ENCODE measurements at regions of chr22 and their contacts with region 1.

Region 1: GRCh38 chr22:19854778-19855503 is at the starts of genes GNB1L and RTL10:
- DNase-seq: peak; percentile 100

Region 2: GRCh38 chr22:19843107-19843856 is 11.7 kb before region 1 on chr22:
- CTCF ChIA-PET with region 1: no interaction called
- POLR2A ChIA-PET with region 1: interaction called, 15 read pairs
- DNase-seq: no peak

Region 3: GRCh38 chr22:19867617-19868016 is 12.7 kb after region 1 on chr22:
- CTCF ChIA-PET with region 1: interaction called, 4 read pairs
- POLR2A ChIA-PET with region 1: interaction called, 29 read pairs
- DNase-seq: no peak

Region 4: GRCh38 chr22:19874307-19875060 is 19.5 kb after region 1 on chr22:
- CTCF ChIA-PET with region 1: no interaction called
- POLR2A ChIA-PET with region 1: interaction called, 16 read pairs
- DNase-seq: no peak

Region 5: GRCh38 chr22:19886601-19887255 is 31.8 kb after region 1 on chr22:
- CTCF ChIA-PET with region 1: no interaction called
- POLR2A ChIA-PET with region 1: interaction called, 12 read pairs
- DNase-seq: no peak